ENCODE measurements at regions of chr5 and their contacts with region 1.

Region 1: GRCh38 chr5:145975361-145976066 is 39.1 kb downstream of the SH3RF2 start:
- DNase-seq: peak; percentile 66 to 77
- H3K4me3 ChIP-seq: no peak overlapping the region
- H3K27ac ChIP-seq: peak overlapping the region; percentile 32; the same call in 1 of the 2 replicates
- H3K4me1 ChIP-seq: peaks cover 46% of the 10 kb centered on the region
- H3K27me3 ChIP-seq: no peaks in the 10 kb centered on the region
- CTCF ChIP-seq: no peak

Region 2: GRCh38 chr5:145818604-145819003 is 156.9 kb before region 1 on chr5:
- CTCF ChIA-PET with region 1: no interaction called
- POLR2A ChIA-PET with region 1: no interaction called
- intact Hi-C with region 1: no loop called
- DNase-seq: no peak
- H3K4me3 ChIP-seq: no peak overlapping the region
- H3K27ac ChIP-seq: no peak overlapping the region
- H3K4me1 ChIP-seq: no peaks in the 10 kb centered on the region
- H3K27me3 ChIP-seq: no peaks in the 10 kb centered on the region
- CTCF ChIP-seq: no peak

Region 3: DNA sequence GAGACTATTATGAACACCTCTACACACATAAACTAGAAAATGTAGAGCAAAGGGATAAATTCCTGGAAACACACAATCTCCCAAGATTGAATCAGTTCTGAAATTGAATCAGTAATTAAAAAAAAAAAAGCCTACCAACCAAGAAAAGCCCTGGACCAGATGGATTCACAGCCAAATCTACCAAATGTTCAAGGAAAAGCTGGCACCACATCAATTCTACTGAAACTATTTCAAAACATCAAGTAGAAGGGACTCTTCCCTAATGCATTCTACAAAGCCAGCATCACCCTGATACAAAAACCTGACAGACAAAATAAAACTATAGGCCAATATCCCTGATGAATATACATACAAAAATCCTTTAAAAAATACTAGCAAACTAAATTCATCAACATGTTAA is 77.3 kb before region 1 on chr5:
- CTCF ChIA-PET with region 1: no interaction called
- POLR2A ChIA-PET with region 1: no interaction called
- intact Hi-C with region 1: no loop called
- DNase-seq: no peak
- H3K4me3 ChIP-seq: no peak overlapping the region
- H3K27ac ChIP-seq: no peak overlapping the region
- H3K4me1 ChIP-seq: no peaks in the 10 kb centered on the region
- H3K27me3 ChIP-seq: no peaks in the 10 kb centered on the region
- CTCF ChIP-seq: no peak

Region 4: GRCh38 chr5:145946112-145946861 is 29.2 kb before region 1 on chr5:
- CTCF ChIA-PET with region 1: no interaction called
- POLR2A ChIA-PET with region 1: interaction called, 6 read pairs
- intact Hi-C with region 1: loop called (anchors 1 kb)
- DNase-seq: peak in 1 of 2 experiments; percentile 98
- H3K4me3 ChIP-seq: no peak overlapping the region; the same call in 1 of the 2 replicates
- H3K27ac ChIP-seq: peak overlapping the region; percentile 84
- H3K4me1 ChIP-seq: peaks cover 68% of the 10 kb centered on the region
- H3K27me3 ChIP-seq: no peaks in the 10 kb centered on the region
- CTCF ChIP-seq: no peak

Region 5: DNA sequence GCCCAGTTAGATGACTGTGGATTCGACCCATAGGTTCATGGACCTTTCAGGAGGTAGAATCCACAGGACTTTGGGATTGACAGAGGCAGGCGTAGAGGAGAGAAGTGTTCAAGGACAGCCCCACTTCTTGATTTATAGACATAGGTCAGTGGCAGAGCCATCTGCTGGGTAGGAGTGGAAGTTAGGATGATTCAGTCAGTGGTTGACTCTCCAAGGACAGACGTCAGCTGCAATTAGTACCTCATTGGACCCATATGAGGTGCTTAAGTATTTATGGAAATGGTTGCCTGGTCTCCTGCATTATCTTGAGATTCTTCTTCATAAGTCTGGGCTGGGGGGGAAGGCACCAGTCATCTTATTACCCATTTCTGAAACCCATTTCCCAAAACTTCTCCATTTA is 31.8 kb after region 1 on chr5:
- CTCF ChIA-PET with region 1: no interaction called
- POLR2A ChIA-PET with region 1: no interaction called
- intact Hi-C with region 1: no loop called
- DNase-seq: no peak
- H3K4me3 ChIP-seq: no peak overlapping the region
- H3K27ac ChIP-seq: no peak overlapping the region
- H3K4me1 ChIP-seq: no peaks in the 10 kb centered on the region
- H3K27me3 ChIP-seq: no peaks in the 10 kb centered on the region
- CTCF ChIP-seq: no peak

Region 6: GRCh38 chr5:146027751-146028150 is 52.2 kb after region 1 on chr5:
- CTCF ChIA-PET with region 1: no interaction called
- POLR2A ChIA-PET with region 1: no interaction called
- intact Hi-C with region 1: loop called (anchors 5 kb)
- DNase-seq: peak; percentile 75 to 99
- H3K4me3 ChIP-seq: no peak overlapping the region; the same call in 1 of the 2 replicates
- H3K27ac ChIP-seq: peak overlapping the region; percentile 79
- H3K4me1 ChIP-seq: peaks cover 26% of the 10 kb centered on the region
- H3K27me3 ChIP-seq: no peaks in the 10 kb centered on the region
- CTCF ChIP-seq: no peak

Region 7: GRCh38 chr5:146240951-146241350 is 265.4 kb after region 1 on chr5:
- CTCF ChIA-PET with region 1: no interaction called
- POLR2A ChIA-PET with region 1: no interaction called
- intact Hi-C with region 1: no loop called
- DNase-seq: no peak
- H3K4me3 ChIP-seq: no peak overlapping the region
- H3K27ac ChIP-seq: no peak overlapping the region
- H3K4me1 ChIP-seq: no peaks in the 10 kb centered on the region
- H3K27me3 ChIP-seq: no peaks in the 10 kb centered on the region
- CTCF ChIP-seq: no peak